Activated CD4-positive, alpha-beta T cell treated with anti-CD3 and anti-CD28 coated beads for 36 hours (primary cell): ENCODE measurements at regions of chr3 and their contacts with region 1.

Region 1: GRCh38 chr3:101195951-101196713 is 124.2 kb downstream of the IMPG2 start:
- DNase-seq: no peak
- ATAC-seq: no peak
- H3K4me3 Mint-ChIP-seq: no peak overlapping the region
- H3K27ac Mint-ChIP-seq: no peak overlapping the region
- H3K4me1 Mint-ChIP-seq: no peaks in the 10 kb centered on the region
- H3K27me3 Mint-ChIP-seq: peaks cover 5% of the 10 kb centered on the region

Region 2: DNA sequence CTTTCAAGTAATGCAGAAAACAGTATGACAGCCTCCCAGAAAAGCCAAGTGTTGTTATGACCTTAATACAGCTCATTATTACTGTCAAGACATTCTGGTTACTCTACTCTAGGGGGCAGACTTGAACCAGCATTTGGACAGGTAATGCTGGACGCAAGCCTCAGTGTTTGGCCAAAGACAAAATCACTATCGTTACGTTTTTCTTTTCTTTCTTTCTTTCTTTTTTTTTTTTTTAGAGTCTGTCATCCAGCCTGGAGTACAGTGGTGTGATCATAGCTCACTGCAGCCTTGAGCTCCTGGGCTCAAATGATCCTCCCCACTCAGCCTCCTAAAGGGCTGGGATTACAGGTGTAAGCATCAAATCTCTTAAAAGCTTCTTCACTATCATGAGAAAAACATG is 733.1 kb before region 1 on chr3:
- CTCF ChIA-PET with region 1: no interaction called
- POLR2A ChIA-PET with region 1: no interaction called
- intact Hi-C with region 1: loop called in 1 of 2 experiments (anchors 2 kb)
- DNase-seq: peak; percentile 22
- ATAC-seq: peak; percentile 94
- H3K4me3 Mint-ChIP-seq: no peak overlapping the region
- H3K27ac Mint-ChIP-seq: no peak overlapping the region
- H3K4me1 Mint-ChIP-seq: no peaks in the 10 kb centered on the region
- H3K27me3 Mint-ChIP-seq: peaks cover 2% of the 10 kb centered on the region

Region 3: GRCh38 chr3:100968932-100969906 is 226.9 kb before region 1 on chr3:
- CTCF ChIA-PET with region 1: no interaction called
- POLR2A ChIA-PET with region 1: no interaction called
- intact Hi-C with region 1: no loop called
- DNase-seq: no peak
- ATAC-seq: no peak
- H3K4me3 Mint-ChIP-seq: no peak overlapping the region
- H3K27ac Mint-ChIP-seq: no peak overlapping the region
- H3K4me1 Mint-ChIP-seq: no peaks in the 10 kb centered on the region
- H3K27me3 Mint-ChIP-seq: peaks cover 6% of the 10 kb centered on the region

Region 4: GRCh38 chr3:101069901-101070798 is 126.0 kb before region 1 on chr3:
- CTCF ChIA-PET with region 1: interaction called, 8 read pairs
- POLR2A ChIA-PET with region 1: no interaction called
- intact Hi-C with region 1: loop called (anchors 1 kb)
- DNase-seq: peak; percentile 88
- ATAC-seq: peak; percentile 85
- H3K4me3 Mint-ChIP-seq: no peak overlapping the region
- H3K27ac Mint-ChIP-seq: no peak overlapping the region
- H3K4me1 Mint-ChIP-seq: peaks cover 4% of the 10 kb centered on the region
- H3K27me3 Mint-ChIP-seq: peaks cover 19% of the 10 kb centered on the region